ENCODE measurements at regions of chr10 and their contacts with region 1.

Region 1: DNA sequence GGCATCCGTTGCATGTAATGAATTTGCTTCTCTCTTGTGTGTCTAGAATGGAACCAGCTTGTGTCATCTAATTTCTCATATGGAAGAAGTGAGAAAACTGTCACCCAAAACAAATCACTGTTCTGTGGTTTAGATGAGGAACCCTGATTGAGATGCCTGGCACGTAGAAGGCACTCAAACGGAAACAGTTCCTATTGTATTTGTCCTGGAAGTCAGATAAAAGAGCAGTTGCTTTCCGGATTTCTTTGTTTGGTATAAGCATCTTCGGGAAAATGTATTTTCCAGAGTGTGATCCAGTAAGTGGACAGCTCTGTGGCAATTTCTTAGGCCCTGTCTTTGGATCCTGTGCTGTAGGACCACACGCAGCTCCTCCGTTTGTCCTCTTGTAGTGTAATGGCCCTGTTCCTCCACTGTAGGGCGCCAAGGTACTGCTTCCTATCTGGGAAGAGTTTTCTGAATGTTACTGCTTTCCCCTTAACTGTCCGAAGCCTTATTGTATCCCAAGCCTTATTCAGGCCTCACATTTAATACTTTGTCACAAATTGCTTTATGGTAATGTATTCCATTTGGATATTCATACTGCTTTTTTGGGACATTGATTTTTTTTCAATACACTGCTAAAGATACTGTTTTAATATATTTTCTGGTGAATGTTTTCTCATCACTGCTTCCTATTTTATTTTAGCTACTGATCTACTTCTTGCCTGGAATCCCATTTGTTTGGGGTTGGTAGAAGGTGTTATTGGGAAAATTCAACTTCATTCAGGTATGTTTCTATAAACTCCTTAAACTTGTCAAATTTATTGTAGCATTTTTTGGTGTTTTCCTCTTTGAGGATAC is 24.8 kb downstream of the INPP5F start:
- DNase-seq: peak; percentile 35 to 77
- ATAC-seq: peak; percentile 91 to 100 (median 99)
- H3K4me3 ChIP-seq: no peak overlapping the region
- H3K4me3 Mint-ChIP-seq: no peak overlapping the region
- H3K27ac ChIP-seq: no peak overlapping the region
- H3K27ac Mint-ChIP-seq: peak overlapping the region in 1 of 2 donors; percentile 0
- H3K4me1 ChIP-seq: no peaks in the 10 kb centered on the region
- H3K4me1 Mint-ChIP-seq: peaks cover 6 to 11% of the 10 kb centered on the region in 2 donors
- H3K27me3 ChIP-seq: no peaks in the 10 kb centered on the region
- H3K27me3 Mint-ChIP-seq: no peaks in the 10 kb centered on the region
- CTCF ChIP-seq: peak; percentile 80

Region 2: GRCh38 chr10:119283818-119284217 is 466.8 kb before region 1 on chr10:
- intact Hi-C with region 1: no loop called
- DNase-seq: peak in 1 of 2 donors; percentile 63
- ATAC-seq: peak in 2 of 3 donors; percentile 35 to 60
- H3K4me3 ChIP-seq: no peak overlapping the region
- H3K4me3 Mint-ChIP-seq: peak overlapping the region; percentile 52
- H3K27ac ChIP-seq: peak overlapping the region; percentile 21
- H3K27ac Mint-ChIP-seq: peak overlapping the region; percentile 69 to 94
- H3K4me1 ChIP-seq: peaks cover 33% of the 10 kb centered on the region
- H3K4me1 Mint-ChIP-seq: peaks cover 60 to 72% of the 10 kb centered on the region in 2 donors
- H3K27me3 ChIP-seq: no peaks in the 10 kb centered on the region
- H3K27me3 Mint-ChIP-seq: no peaks in the 10 kb centered on the region
- CTCF ChIP-seq: no peak

Region 3: GRCh38 chr10:119859420-119860258 is 109.0 kb after region 1 on chr10:
- intact Hi-C with region 1: loop called (anchors 1 kb)
- DNase-seq: peak in 1 of 2 donors; percentile 74
- ATAC-seq: peak; percentile 62 to 65 (median 62)
- H3K4me3 ChIP-seq: no peak overlapping the region
- H3K4me3 Mint-ChIP-seq: no peak overlapping the region
- H3K27ac ChIP-seq: no peak overlapping the region
- H3K27ac Mint-ChIP-seq: peak overlapping the region; percentile 39 to 45
- H3K4me1 ChIP-seq: no peaks in the 10 kb centered on the region
- H3K4me1 Mint-ChIP-seq: peaks cover 37 to 42% of the 10 kb centered on the region in 2 donors
- H3K27me3 ChIP-seq: no peaks in the 10 kb centered on the region
- H3K27me3 Mint-ChIP-seq: no peaks in the 10 kb centered on the region
- CTCF ChIP-seq: peak; percentile 87

Region 4: GRCh38 chr10:120336911-120337540 is 586.4 kb after region 1 on chr10:
- intact Hi-C with region 1: loop called (anchors 1 kb)
- DNase-seq: peak; percentile 20 to 64
- ATAC-seq: peak in 1 of 3 donors; percentile 53
- H3K4me3 ChIP-seq: no peak overlapping the region
- H3K4me3 Mint-ChIP-seq: no peak overlapping the region
- H3K27ac ChIP-seq: no peak overlapping the region
- H3K27ac Mint-ChIP-seq: no peak overlapping the region
- H3K4me1 ChIP-seq: no peaks in the 10 kb centered on the region
- H3K4me1 Mint-ChIP-seq: no peaks in the 10 kb centered on the region
- H3K27me3 ChIP-seq: no peaks in the 10 kb centered on the region
- H3K27me3 Mint-ChIP-seq: peaks cover 7 to 22% of the 10 kb centered on the region in 2 donors
- CTCF ChIP-seq: peak; percentile 77